Activated CD4-positive, alpha-beta T cell treated with anti-CD3 and anti-CD28 coated beads, Interleukin-2, amount 10 ng/mL, durations not matched to agents 7 days and 5 days (primary cell): ENCODE measurements at regions of chrX and their contacts with region 1.

Region 1: DNA sequence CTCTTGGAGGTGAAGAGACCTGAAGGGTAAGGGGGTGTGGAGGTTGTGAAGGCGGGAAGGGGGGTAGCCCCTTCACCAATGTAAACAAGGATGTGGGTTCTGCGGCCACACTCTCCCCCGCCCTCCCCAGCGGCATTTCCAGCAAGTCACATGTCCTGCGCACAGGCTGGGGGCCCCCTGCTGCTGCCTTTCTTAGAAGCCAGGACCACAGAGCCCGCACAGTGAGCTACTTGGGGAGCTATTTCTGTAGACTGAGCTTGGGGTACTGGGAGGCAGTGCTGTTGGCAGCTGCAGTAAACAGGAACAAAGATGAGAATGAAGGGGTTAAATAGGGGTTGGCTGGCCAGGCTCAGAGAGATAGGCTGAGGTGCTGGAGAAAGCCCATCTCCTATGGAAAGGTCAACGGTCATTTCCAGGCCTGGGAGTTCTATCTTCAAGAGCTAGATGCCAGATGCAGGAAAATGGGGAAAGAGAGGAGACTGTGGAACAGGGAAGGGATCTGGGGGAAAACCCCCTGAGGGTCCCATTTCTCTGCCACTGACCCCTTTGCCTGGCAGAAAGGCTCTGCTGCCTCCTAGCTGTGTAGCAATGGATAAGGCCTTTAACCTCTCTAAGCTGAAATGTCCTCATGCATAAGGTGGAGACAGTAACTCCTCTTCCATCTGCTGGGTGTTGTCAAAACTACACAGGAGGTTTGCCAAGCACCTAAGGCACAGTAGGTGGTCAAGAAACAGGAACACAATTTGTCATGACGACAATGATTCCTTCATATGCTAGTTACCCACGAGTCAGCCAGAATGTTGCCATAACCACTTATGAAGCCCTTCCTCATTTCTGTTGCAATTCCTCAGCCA is 18.5 kb upstream of the PIM2 start:
- DNase-seq: peak; percentile 92
- H3K4me3 Mint-ChIP-seq: peak overlapping the region; percentile 77
- H3K27ac Mint-ChIP-seq: peak overlapping the region; percentile 99
- H3K4me1 Mint-ChIP-seq: peaks cover 81% of the 10 kb centered on the region
- H3K27me3 Mint-ChIP-seq: no peaks in the 10 kb centered on the region

Region 2: GRCh38 chrX:48917139-48918001 is 19.9 kb before region 1 on chrX:
- CTCF ChIA-PET with region 1: interaction called, 16 read pairs
- POLR2A ChIA-PET with region 1: interaction called, 4 read pairs
- DNase-seq: peak; percentile 92
- H3K4me3 Mint-ChIP-seq: peak overlapping the region; percentile 99
- H3K27ac Mint-ChIP-seq: peak overlapping the region; percentile 98
- H3K4me1 Mint-ChIP-seq: peaks cover 57% of the 10 kb centered on the region
- H3K27me3 Mint-ChIP-seq: no peaks in the 10 kb centered on the region

Region 3: GRCh38 chrX:49058794-49059193 is 121.5 kb after region 1 on chrX and contains the start of gene CCDC120:
- CTCF ChIA-PET with region 1: no interaction called
- POLR2A ChIA-PET with region 1: no interaction called
- DNase-seq: no peak
- H3K4me3 Mint-ChIP-seq: no peak within 1 kb of the TSS
- H3K27ac Mint-ChIP-seq: no peak within 1 kb of the TSS
- H3K4me1 Mint-ChIP-seq: peaks cover 22% of the 10 kb centered on the region
- H3K27me3 Mint-ChIP-seq: no peaks in the 10 kb centered on the region
- total RNA-seq, gene CCDC120: 5.5 to 5.9 TPM